H1 (cell line): ENCODE measurements at regions of chr13 and their contacts with region 1.

Region 1: DNA sequence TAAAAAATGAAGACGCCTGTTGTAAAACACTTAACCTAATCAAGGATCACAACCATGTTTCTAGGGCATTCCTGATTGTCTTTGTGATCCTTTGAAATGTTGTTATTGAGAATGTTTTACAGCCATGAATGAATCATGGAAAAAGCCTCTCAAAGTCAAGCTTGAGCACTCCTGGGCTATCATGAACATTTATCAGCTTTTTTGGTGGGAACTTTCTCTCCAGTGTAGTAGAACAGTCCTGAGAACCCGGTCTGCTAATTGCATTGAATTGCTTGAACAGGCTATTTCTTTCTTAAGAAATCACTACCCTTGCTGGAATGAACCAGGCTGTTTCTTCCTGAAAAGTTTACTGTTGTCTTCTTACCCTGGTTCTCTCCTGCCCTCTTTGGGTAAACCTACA is 516.5 kb downstream of the FGF9 start:
- DNase-seq: no peak
- H3K4me3 ChIP-seq: no peak overlapping the region
- H3K27ac ChIP-seq: no peak overlapping the region
- H3K4me1 ChIP-seq: no peaks in the 10 kb centered on the region
- H3K27me3 ChIP-seq: no peaks in the 10 kb centered on the region
- CTCF ChIP-seq: no peak
- EP300 ChIP-seq: no peak
- POLR2A ChIP-seq: no peak
- RAD21 ChIP-seq: no peak

Region 2: DNA sequence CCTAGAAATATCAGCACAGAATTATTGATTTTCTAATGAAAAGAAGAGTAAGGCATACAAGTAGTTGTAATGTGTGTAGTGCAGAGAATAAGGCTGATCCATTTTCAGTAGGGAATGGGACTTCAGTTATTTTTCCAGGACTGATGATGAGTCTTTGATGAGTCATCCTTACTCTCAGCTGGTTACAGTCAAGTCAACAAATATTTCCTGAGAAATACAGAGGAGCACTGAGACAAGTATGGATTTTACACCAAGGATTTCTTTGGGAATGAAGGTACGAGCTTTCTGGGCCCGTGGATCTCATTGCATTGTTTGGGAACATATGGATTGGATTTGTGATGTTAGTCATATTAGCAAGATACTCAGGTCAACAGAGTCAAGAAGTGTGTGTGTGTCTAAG is 13.7 kb before region 1 on chr13:
- CTCF ChIA-PET with region 1: interaction called, 20 read pairs
- POLR2A ChIA-PET with region 1: no interaction called
- DNase-seq: no peak
- H3K4me3 ChIP-seq: no peak overlapping the region
- H3K27ac ChIP-seq: no peak overlapping the region
- H3K4me1 ChIP-seq: no peaks in the 10 kb centered on the region; a peak in 1 of 7 replicates
- H3K27me3 ChIP-seq: no peaks in the 10 kb centered on the region
- CTCF ChIP-seq: no peak
- EP300 ChIP-seq: no peak
- POLR2A ChIP-seq: no peak
- RAD21 ChIP-seq: no peak